Caco-2 (cell line): ENCODE measurements at regions of chrX and their contacts with region 1.

Region 1: DNA sequence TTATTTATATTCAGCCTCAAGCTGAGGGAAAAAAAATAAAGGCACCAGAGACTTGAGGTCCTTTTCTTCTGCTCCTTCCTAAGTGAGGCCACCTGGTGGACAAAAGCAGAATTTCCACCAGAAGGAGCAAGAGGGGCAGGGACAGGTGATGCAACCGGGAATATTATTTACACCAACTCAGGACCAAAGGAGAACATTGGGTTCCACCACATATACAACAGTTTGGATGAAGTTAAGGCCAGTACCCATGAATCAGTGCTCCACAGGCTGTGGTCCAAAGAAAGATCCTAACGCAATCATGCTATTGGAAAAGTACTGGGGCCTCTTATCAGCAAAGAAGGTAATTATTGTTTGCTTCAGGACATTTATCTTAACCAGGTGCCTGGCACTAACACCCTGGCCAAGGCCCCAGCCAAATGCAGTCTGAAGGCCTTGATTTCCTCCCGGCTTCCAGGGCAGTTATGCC is 57.4 kb downstream of the TSC22D3 start:
- DNase-seq: peak; percentile 72 to 80
- H3K4me3 ChIP-seq: no peak overlapping the region
- H3K4me3 Mint-ChIP-seq: no peak overlapping the region
- H3K27ac Mint-ChIP-seq: peak overlapping the region; percentile 63
- H3K4me1 ChIP-seq: peaks cover 5% of the 10 kb centered on the region; the same call in 1 of the 2 replicates
- H3K4me1 Mint-ChIP-seq: peaks cover 6% of the 10 kb centered on the region
- H3K27me3 ChIP-seq: no peaks in the 10 kb centered on the region
- H3K27me3 Mint-ChIP-seq: no peaks in the 10 kb centered on the region
- CTCF ChIP-seq: peak; percentile 55 to 56

Region 2: GRCh38 chrX:107619885-107620322 is 98.3 kb before region 1 on chrX:
- CTCF ChIA-PET with region 1: no interaction called
- POLR2A ChIA-PET with region 1: no interaction called
- intact Hi-C with region 1: no loop called
- DNase-seq: peak; percentile 33 to 59
- H3K4me3 ChIP-seq: no peak overlapping the region
- H3K4me3 Mint-ChIP-seq: no peak overlapping the region
- H3K27ac Mint-ChIP-seq: no peak overlapping the region
- H3K4me1 ChIP-seq: 0 out of 2 replicates have a peak, but pooled peaks cover 3% of the 10 kb centered on the region
- H3K4me1 Mint-ChIP-seq: no peaks in the 10 kb centered on the region
- H3K27me3 ChIP-seq: no peaks in the 10 kb centered on the region
- H3K27me3 Mint-ChIP-seq: no peaks in the 10 kb centered on the region
- CTCF ChIP-seq: no peak

Region 3: DNA sequence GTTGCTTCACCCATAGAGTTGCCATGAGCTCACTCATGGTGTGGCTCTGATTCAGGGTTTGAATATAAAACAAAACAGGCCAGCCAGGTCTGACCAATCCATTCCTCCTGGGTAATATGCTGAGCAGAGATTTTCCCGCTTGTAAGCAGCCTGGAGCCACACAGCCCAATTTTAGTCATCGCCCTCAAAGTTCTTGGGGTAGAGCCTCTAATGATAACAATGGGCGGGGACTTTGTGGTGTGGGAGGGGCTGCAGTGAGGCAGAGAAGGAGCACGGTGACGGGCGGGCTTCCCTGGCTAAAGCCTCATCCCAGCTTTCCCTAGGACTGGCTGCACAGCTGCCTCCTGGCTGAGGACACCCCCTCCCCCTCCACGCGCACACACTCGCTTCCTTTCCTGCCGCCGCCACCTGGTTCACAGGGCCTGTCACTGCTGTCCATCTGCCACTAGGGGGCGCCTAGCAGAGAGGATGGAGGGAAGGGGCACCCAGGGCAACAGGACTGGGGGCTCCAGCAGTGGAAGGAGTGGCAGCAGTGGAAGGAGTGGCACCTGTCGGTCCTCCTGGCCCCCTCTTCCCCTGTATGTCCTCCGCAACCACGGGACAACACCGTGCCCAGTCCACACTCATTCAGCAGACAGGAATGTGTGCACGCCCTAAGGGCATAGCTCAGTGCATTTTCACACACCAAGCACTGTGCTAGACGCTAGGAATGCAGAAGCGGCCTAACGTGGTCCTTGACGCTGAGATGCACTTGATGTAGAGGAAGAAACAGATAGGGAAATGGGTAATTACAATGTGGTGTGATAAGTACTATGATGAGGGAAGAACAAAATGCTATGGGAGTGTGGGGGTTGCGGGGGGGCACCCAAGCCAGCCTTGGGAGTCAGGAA is 63.1 kb before region 1 on chrX:
- CTCF ChIA-PET with region 1: no interaction called
- POLR2A ChIA-PET with region 1: no interaction called
- intact Hi-C with region 1: loop called (anchors 1 kb)
- DNase-seq: peak; percentile 30 to 38
- H3K4me3 ChIP-seq: no peak overlapping the region
- H3K4me3 Mint-ChIP-seq: no peak overlapping the region
- H3K27ac Mint-ChIP-seq: peak overlapping the region; percentile 32
- H3K4me1 ChIP-seq: no peaks in the 10 kb centered on the region
- H3K4me1 Mint-ChIP-seq: no peaks in the 10 kb centered on the region
- H3K27me3 ChIP-seq: no peaks in the 10 kb centered on the region
- H3K27me3 Mint-ChIP-seq: no peaks in the 10 kb centered on the region
- CTCF ChIP-seq: peak; percentile 23 to 29

Region 4: DNA sequence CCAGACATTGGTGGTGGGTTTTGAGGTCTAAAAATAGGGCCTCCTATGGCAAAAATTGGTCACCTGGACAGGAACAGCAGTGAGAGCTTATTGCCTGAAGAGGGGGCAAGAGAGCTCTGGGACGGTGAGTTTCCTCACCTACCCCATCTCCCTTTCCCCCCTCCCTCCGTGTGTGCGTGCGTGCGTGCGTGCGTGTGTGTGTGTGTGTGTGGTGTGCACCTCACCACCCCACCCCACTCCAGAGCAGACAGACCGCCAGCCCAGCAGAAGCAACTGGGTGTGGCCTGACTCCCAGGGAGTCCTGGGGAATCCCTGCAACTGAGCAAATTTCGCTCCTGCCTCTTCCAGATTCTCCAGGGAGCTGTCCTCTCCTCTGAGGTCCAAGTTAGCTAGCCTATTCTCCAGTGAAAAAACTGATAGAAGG is 45.2 kb before region 1 on chrX:
- CTCF ChIA-PET with region 1: interaction called, 4 read pairs
- POLR2A ChIA-PET with region 1: no interaction called
- intact Hi-C with region 1: loop called (anchors 1 kb)
- DNase-seq: peak; percentile 42 to 43
- H3K4me3 ChIP-seq: no peak overlapping the region
- H3K4me3 Mint-ChIP-seq: no peak overlapping the region
- H3K27ac Mint-ChIP-seq: no peak overlapping the region
- H3K4me1 ChIP-seq: 0 out of 2 replicates have a peak, but pooled peaks cover 6% of the 10 kb centered on the region
- H3K4me1 Mint-ChIP-seq: peaks cover 8% of the 10 kb centered on the region
- H3K27me3 ChIP-seq: no peaks in the 10 kb centered on the region
- H3K27me3 Mint-ChIP-seq: no peaks in the 10 kb centered on the region
- CTCF ChIP-seq: peak; percentile 32 to 52

Region 5: DNA sequence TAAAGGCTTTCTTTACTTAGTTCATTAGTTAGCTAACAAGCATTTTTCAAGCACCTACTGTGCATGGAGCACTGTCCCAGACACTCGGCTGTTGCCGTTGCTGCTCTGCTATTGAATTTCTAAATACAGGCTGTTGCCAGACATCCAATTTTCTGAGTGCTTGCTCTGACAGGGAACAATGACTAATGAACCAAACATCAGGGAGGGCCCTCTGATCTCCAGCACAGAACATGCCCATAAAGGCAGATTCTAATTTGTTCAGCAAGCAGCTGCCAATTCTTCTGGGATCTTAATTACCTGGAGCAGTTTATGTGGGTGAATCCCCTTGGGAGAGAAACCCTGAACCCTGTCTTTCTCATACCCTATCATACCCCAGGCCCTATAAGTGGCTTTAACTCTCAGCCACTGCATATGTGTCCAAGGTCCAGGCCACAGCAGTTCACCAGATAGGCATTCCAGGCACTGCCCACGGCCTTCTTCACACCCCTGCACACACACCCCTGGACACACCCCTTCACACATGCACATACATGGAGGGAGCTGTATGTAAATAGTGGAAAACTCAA is 29.5 kb after region 1 on chrX:
- CTCF ChIA-PET with region 1: no interaction called
- POLR2A ChIA-PET with region 1: no interaction called
- intact Hi-C with region 1: no loop called
- DNase-seq: no peak
- H3K4me3 ChIP-seq: no peak overlapping the region
- H3K4me3 Mint-ChIP-seq: no peak overlapping the region
- H3K27ac Mint-ChIP-seq: no peak overlapping the region
- H3K4me1 ChIP-seq: no peaks in the 10 kb centered on the region
- H3K4me1 Mint-ChIP-seq: no peaks in the 10 kb centered on the region
- H3K27me3 ChIP-seq: no peaks in the 10 kb centered on the region
- H3K27me3 Mint-ChIP-seq: no peaks in the 10 kb centered on the region
- CTCF ChIP-seq: no peak